Posterior cingulate gyrus (tissue), 11 donors: ENCODE measurements at regions of chr10 and their contacts with region 1.

Region 1: GRCh38 chr10:93288654-93289634 is 193.2 kb downstream of the MYOF start:
- DNase-seq: peak in 9 of 10 donors; percentile 21 to 92 (median 61)

Region 2: GRCh38 chr10:93006435-93007039 is 282.4 kb before region 1 on chr10:
- intact Hi-C with region 1: loop called (anchors 5 kb)
- DNase-seq: no peak

Region 3: GRCh38 chr10:93080350-93081046 is 208.4 kb before region 1 on chr10:
- intact Hi-C with region 1: loop called (anchors 1 kb)
- DNase-seq: peak in 8 of 10 donors; percentile 56 to 94 (median 69)

Region 4: DNA sequence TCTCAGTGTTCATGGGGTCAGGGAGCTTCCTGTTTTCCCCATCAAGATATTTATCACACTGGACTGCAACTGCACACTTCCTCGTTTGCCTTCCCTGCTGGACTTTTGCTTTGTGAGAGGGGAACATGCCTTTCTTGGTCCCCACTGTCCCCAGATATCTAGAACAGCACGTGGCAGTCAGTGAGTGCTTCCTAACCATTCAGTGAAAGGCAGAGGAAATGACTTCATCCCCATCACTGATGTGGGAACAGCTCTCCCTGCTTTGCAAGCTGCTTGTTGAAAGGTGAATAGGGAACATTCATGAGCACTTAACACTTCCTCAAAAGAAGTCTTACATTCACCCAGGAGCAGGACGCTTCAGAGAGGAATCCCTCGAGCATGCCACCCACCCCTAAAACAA is 57.8 kb after region 1 on chr10:
- intact Hi-C with region 1: no loop called
- DNase-seq: no peak